Naive thymus-derived CD4-positive, alpha-beta T cell (primary cell): ENCODE measurements at regions of chr6 and their contacts with region 1.

Region 1: GRCh38 chr6:52664186-52664990 is 6.5 kb upstream of the TMEM14A start:
- DNase-seq: peak in 8 of 9 donors; percentile 22 to 73 (median 34)
- ATAC-seq: peak; percentile 78
- H3K4me3 ChIP-seq: peak overlapping the region; percentile 68
- H3K4me3 Mint-ChIP-seq: no peak overlapping the region
- H3K27ac ChIP-seq: peak overlapping the region; percentile 28
- H3K27ac Mint-ChIP-seq: no peak overlapping the region
- H3K4me1 ChIP-seq: peaks cover 0 to 5% of the 10 kb centered on the region in 2 donors
- H3K4me1 Mint-ChIP-seq: peaks cover 0 to 6% (median 0%) of the 10 kb centered on the region in 7 donors
- H3K27me3 ChIP-seq: peaks cover 0 to 3% of the 10 kb centered on the region in 2 donors
- H3K27me3 Mint-ChIP-seq: no peaks in the 10 kb centered on the region

Region 2: GRCh38 chr6:52049252-52050050 is 614.9 kb before region 1 on chr6:
- CTCF ChIA-PET with region 1: no interaction called
- POLR2A ChIA-PET with region 1: no interaction called
- intact Hi-C with region 1: loop called in 1 of 2 experiments (anchors 5 kb)
- DNase-seq: peak in 5 of 9 donors; percentile 7 to 32 (median 14)
- ATAC-seq: no peak
- H3K4me3 ChIP-seq: no peak overlapping the region
- H3K4me3 Mint-ChIP-seq: no peak overlapping the region
- H3K27ac ChIP-seq: no peak overlapping the region
- H3K27ac Mint-ChIP-seq: no peak overlapping the region
- H3K4me1 ChIP-seq: no peaks in the 10 kb centered on the region
- H3K4me1 Mint-ChIP-seq: peaks cover 0 to 1% (median 0%) of the 10 kb centered on the region in 7 donors
- H3K27me3 ChIP-seq: no peaks in the 10 kb centered on the region
- H3K27me3 Mint-ChIP-seq: peaks cover 15 to 34% (median 26%) of the 10 kb centered on the region in 5 donors

Region 3: GRCh38 chr6:52263709-52264540 is 400.5 kb before region 1 on chr6:
- CTCF ChIA-PET with region 1: no interaction called
- POLR2A ChIA-PET with region 1: no interaction called
- intact Hi-C with region 1: loop called in 1 of 2 experiments (anchors 1 kb)
- DNase-seq: peak; percentile 42 to 73 (median 64)
- ATAC-seq: peak; percentile 91
- H3K4me3 ChIP-seq: no peak overlapping the region
- H3K4me3 Mint-ChIP-seq: peak overlapping the region in 4 of 10 donors; percentile 25 to 44 (median 40)
- H3K27ac ChIP-seq: no peak overlapping the region
- H3K27ac Mint-ChIP-seq: peak overlapping the region in 7 of 9 donors; percentile 1 to 90 (median 18)
- H3K4me1 ChIP-seq: peaks cover 0 to 3% of the 10 kb centered on the region in 2 donors
- H3K4me1 Mint-ChIP-seq: peaks cover 3 to 19% (median 15%) of the 10 kb centered on the region in 7 donors
- H3K27me3 ChIP-seq: no peaks in the 10 kb centered on the region
- H3K27me3 Mint-ChIP-seq: no peaks in the 10 kb centered on the region

Region 4: GRCh38 chr6:52419809-52420670 is 244.3 kb before region 1 on chr6 and contains the start of gene EFHC1:
- CTCF ChIA-PET with region 1: interaction called, 14 read pairs
- POLR2A ChIA-PET with region 1: interaction called, 4 read pairs
- intact Hi-C with region 1: loop called (anchors 1 kb)
- DNase-seq: peak; percentile 95 to 98 (median 97)
- ATAC-seq: peak; percentile 97
- H3K4me3 ChIP-seq: peak within 1 kb of the TSS; percentile 73
- H3K4me3 Mint-ChIP-seq: no peak within 1 kb of the TSS
- H3K27ac ChIP-seq: peak within 1 kb of the TSS; percentile 72
- H3K27ac Mint-ChIP-seq: peak within 1 kb of the TSS in 1 of 9 donors; percentile 96
- H3K4me1 ChIP-seq: peaks cover 13 to 19% of the 10 kb centered on the region in 2 donors
- H3K4me1 Mint-ChIP-seq: peaks cover 10 to 31% (median 24%) of the 10 kb centered on the region in 7 donors
- H3K27me3 ChIP-seq: no peaks in the 10 kb centered on the region
- H3K27me3 Mint-ChIP-seq: peaks cover 0 to 5% (median 0%) of the 10 kb centered on the region in 5 donors
- total RNA-seq, gene EFHC1: 2.4 to 13.8 (median 6.0) TPM

Region 5: DNA sequence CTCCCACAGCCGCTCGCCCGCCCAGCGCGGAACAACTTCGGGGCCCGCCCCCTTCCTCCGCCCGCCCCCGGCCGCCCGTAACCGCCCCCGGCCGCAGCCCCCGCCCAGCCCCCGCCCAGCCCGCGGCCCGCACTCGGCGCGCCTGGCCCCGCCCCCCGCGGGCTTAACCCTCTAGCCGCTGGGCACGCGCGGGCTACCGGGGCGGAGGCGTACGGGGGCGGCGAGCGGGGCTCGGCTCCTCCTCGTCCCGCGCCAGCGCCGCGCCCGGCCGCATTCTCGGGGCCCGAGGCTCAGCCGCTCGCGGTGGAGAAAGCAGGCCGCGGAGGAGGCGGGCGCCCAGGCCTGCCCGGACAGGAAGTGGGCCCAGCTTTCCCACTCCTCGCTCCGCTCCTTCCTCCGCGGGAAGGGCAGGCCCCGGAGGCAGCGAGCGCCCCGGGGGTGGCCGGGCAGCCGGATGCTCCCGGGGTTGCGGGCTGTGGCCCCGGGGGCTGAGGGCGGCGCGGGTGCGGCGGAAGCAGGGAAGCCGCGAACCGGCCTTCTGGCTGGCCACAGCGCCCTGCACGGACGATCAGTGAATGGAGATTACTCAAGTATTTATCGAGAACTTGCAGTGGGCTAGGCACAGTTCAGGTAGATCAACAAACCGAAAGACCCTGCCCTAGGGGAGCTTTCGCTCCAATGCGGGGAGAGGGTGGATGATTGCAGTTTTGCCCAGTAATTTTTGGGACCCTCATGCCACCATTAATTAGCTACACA is 87.2 kb before region 1 on chr6 and contains the start of gene TRAM2:
- CTCF ChIA-PET with region 1: no interaction called
- POLR2A ChIA-PET with region 1: no interaction called
- intact Hi-C with region 1: loop called (anchors 1 to 2 kb)
- DNase-seq: peak; percentile 67 to 86 (median 79)
- ATAC-seq: peak; percentile 90
- H3K4me3 ChIP-seq: peak within 1 kb of the TSS; percentile 76
- H3K4me3 Mint-ChIP-seq: peak within 1 kb of the TSS; percentile 83 to 95 (median 88)
- H3K27ac ChIP-seq: peak within 1 kb of the TSS; percentile 80
- H3K27ac Mint-ChIP-seq: peak within 1 kb of the TSS; percentile 72 to 93 (median 89)
- H3K4me1 ChIP-seq: peaks cover 27 to 34% of the 10 kb centered on the region in 2 donors
- H3K4me1 Mint-ChIP-seq: peaks cover 35 to 60% (median 49%) of the 10 kb centered on the region in 7 donors
- H3K27me3 ChIP-seq: no peaks in the 10 kb centered on the region
- H3K27me3 Mint-ChIP-seq: peaks cover 0 to 20% (median 0%) of the 10 kb centered on the region in 5 donors
- total RNA-seq, gene TRAM2: 8.9 to 10.9 (median 10.3) TPM

Region 6: DNA sequence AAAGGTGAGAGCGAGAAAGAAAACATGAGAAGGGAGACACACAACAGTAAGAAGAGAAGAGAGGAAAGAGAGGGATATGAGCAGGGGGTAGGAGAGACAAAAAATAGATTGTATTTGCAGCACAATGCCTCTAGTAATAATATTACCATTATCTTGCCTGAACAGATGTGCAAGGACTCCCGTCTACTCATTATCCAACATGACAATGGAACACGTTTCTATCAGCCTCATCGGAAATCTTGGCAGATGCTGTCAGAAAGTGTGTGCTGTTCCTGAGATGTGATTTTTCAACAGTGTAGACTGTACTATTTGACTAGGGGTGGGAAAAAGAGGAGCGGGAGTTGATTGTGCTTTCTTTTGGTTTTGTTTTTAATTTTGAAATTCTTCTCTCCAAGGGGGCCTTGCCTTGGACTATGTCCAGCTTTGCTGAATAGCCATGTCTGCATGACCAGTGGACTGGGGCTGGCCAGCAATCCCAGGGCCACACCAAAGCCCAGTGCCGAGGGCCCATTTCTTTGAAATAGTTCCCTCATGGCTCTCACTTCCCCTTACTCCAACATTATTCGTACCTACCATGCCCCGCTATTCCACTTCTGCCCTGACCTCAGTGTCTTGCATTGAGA is 76.2 kb before region 1 on chr6:
- CTCF ChIA-PET with region 1: no interaction called
- POLR2A ChIA-PET with region 1: no interaction called
- intact Hi-C with region 1: no loop called
- DNase-seq: no peak
- ATAC-seq: no peak
- H3K4me3 ChIP-seq: no peak overlapping the region
- H3K4me3 Mint-ChIP-seq: no peak overlapping the region
- H3K27ac ChIP-seq: no peak overlapping the region
- H3K27ac Mint-ChIP-seq: no peak overlapping the region
- H3K4me1 ChIP-seq: no peaks in the 10 kb centered on the region
- H3K4me1 Mint-ChIP-seq: peaks cover 0 to 2% (median 0%) of the 10 kb centered on the region in 7 donors
- H3K27me3 ChIP-seq: no peaks in the 10 kb centered on the region
- H3K27me3 Mint-ChIP-seq: peaks cover 0 to 7% (median 0%) of the 10 kb centered on the region in 5 donors